ENCODE measurements at regions of chr1 and their contacts with region 1.

Region 1: DNA sequence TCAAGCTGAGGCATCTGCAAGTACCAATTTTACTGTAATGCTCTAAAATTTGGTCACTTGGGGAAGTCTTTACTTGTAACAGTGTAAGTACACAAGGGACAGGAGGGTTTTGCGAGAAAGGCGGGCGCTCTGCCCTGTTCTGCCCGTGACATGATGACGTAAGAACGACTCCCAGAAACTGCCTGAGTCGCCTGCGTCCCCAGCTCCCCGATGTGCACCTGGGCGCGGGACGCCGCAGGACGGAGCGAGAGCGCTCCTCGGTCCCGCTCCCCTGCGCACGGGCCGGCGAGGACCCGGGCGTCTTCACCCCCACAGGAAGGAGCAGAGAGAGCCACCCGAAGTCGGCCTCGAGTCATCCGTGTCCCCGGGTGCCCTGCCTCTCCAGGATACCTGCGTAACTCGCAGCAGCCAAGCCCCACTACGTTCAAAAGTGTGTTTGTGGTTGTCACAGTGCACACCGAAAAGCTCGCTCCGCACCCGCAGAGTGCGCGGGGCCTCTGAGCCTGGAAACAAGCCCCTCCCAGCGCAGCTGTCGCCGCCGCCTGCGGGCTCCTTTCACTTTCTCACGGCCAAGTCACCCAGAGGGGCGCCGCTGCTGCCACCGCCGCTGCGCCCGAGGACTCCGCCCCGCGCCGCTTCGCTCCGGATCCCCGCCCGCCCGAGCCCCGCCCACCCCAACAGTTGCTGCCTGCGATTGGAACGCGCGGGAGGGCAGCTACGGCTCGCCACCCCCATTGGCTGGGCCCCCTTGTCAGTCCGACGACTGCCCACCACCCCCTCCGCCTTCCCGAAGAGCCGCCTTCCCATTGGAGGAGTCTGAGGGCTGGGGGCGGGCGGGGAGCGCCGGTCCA is 3.2 kb upstream of the ZBTB18 start:
- DNase-seq: peak; percentile 85 to 98 (median 97)
- ATAC-seq: peak; percentile 87
- H3K4me3 ChIP-seq: peak overlapping the region; percentile 61
- H3K4me3 Mint-ChIP-seq: peak overlapping the region; percentile 86 to 96 (median 96)
- H3K27ac ChIP-seq: peak overlapping the region; percentile 96
- H3K27ac Mint-ChIP-seq: peak overlapping the region; percentile 97 to 100 (median 98)
- H3K4me1 ChIP-seq: peaks cover 6 to 23% of the 10 kb centered on the region in 2 donors
- H3K4me1 Mint-ChIP-seq: peaks cover 13 to 39% (median 33%) of the 10 kb centered on the region in 7 donors
- H3K27me3 ChIP-seq: no peaks in the 10 kb centered on the region
- H3K27me3 Mint-ChIP-seq: peaks cover 0 to 43% (median 0%) of the 10 kb centered on the region in 5 donors

Region 2: GRCh38 chr1:243343970-243344937 is 703.6 kb before region 1 on chr1:
- CTCF ChIA-PET with region 1: no interaction called
- POLR2A ChIA-PET with region 1: no interaction called
- intact Hi-C with region 1: loop called (anchors 5 kb)
- DNase-seq: peak in 7 of 9 donors; percentile 22 to 65 (median 51)
- ATAC-seq: peak; percentile 64
- H3K4me3 ChIP-seq: no peak overlapping the region
- H3K4me3 Mint-ChIP-seq: no peak overlapping the region
- H3K27ac ChIP-seq: no peak overlapping the region
- H3K27ac Mint-ChIP-seq: no peak overlapping the region
- H3K4me1 ChIP-seq: no peaks in the 10 kb centered on the region
- H3K4me1 Mint-ChIP-seq: peaks cover 0 to 12% (median 3%) of the 10 kb centered on the region in 7 donors
- H3K27me3 ChIP-seq: no peaks in the 10 kb centered on the region
- H3K27me3 Mint-ChIP-seq: no peaks in the 10 kb centered on the region

Region 3: GRCh38 chr1:243946946-243947345 is 100.9 kb before region 1 on chr1:
- CTCF ChIA-PET with region 1: no interaction called
- POLR2A ChIA-PET with region 1: no interaction called
- intact Hi-C with region 1: loop called in 1 of 2 experiments (anchors 2 kb)
- DNase-seq: peak in 6 of 9 donors; percentile 11 to 52 (median 38)
- ATAC-seq: peak; percentile 76
- H3K4me3 ChIP-seq: no peak overlapping the region
- H3K4me3 Mint-ChIP-seq: no peak overlapping the region
- H3K27ac ChIP-seq: no peak overlapping the region
- H3K27ac Mint-ChIP-seq: peak overlapping the region in 1 of 9 donors; percentile 17
- H3K4me1 ChIP-seq: no peaks in the 10 kb centered on the region
- H3K4me1 Mint-ChIP-seq: no peaks in the 10 kb centered on the region
- H3K27me3 ChIP-seq: no peaks in the 10 kb centered on the region
- H3K27me3 Mint-ChIP-seq: peaks cover 0 to 8% (median 5%) of the 10 kb centered on the region in 5 donors

Region 4: GRCh38 chr1:244060686-244061085 is 12.8 kb after region 1 on chr1:
- CTCF ChIA-PET with region 1: interaction called, 3 read pairs
- POLR2A ChIA-PET with region 1: interaction called, 17 read pairs
- intact Hi-C with region 1: loop called in 1 of 2 experiments (anchors 1 kb)
- DNase-seq: no peak
- ATAC-seq: no peak
- H3K4me3 ChIP-seq: no peak overlapping the region
- H3K4me3 Mint-ChIP-seq: no peak overlapping the region
- H3K27ac ChIP-seq: no peak overlapping the region
- H3K27ac Mint-ChIP-seq: no peak overlapping the region
- H3K4me1 ChIP-seq: no peaks in the 10 kb centered on the region
- H3K4me1 Mint-ChIP-seq: peaks cover 0 to 27% (median 2%) of the 10 kb centered on the region in 7 donors
- H3K27me3 ChIP-seq: no peaks in the 10 kb centered on the region
- H3K27me3 Mint-ChIP-seq: peaks cover 0 to 15% (median 0%) of the 10 kb centered on the region in 5 donors

Region 5: DNA sequence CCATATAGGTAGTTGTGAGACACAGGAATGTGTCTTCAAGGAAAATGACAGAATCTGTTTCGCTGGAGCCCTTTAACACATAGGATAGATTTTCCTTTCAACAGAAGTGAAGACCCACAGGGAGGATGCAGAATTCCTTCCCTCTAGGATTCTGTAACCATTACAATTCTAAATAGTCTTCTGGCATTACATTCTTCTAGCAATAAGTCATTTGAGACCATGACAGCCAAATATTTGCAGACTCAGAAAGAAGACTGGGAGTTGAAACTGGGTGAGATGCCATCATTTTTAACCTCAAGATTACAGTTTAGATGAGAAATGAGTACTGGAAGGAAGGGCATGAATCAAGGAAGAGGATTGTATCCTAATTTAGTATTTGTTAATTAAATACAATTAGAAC is 64.8 kb after region 1 on chr1:
- CTCF ChIA-PET with region 1: no interaction called
- POLR2A ChIA-PET with region 1: interaction called, 4 read pairs
- intact Hi-C with region 1: loop called in 1 of 2 experiments (anchors 1 kb)
- DNase-seq: no peak
- ATAC-seq: no peak
- H3K4me3 ChIP-seq: no peak overlapping the region
- H3K4me3 Mint-ChIP-seq: no peak overlapping the region
- H3K27ac ChIP-seq: no peak overlapping the region
- H3K27ac Mint-ChIP-seq: no peak overlapping the region
- H3K4me1 ChIP-seq: no peaks in the 10 kb centered on the region
- H3K4me1 Mint-ChIP-seq: no peaks in the 10 kb centered on the region
- H3K27me3 ChIP-seq: no peaks in the 10 kb centered on the region
- H3K27me3 Mint-ChIP-seq: peaks cover under 1 to 8% (median 5%) of the 10 kb centered on the region in 5 donors

Region 6: GRCh38 chr1:244451951-244452795 is 404.3 kb after region 1 on chr1:
- CTCF ChIA-PET with region 1: no interaction called
- POLR2A ChIA-PET with region 1: interaction called, 4 read pairs
- intact Hi-C with region 1: loop called (anchors 1 kb)
- DNase-seq: peak; percentile 93 to 99 (median 99)
- ATAC-seq: peak; percentile 94
- H3K4me3 ChIP-seq: peak overlapping the region; percentile 64
- H3K4me3 Mint-ChIP-seq: peak overlapping the region; percentile 76 to 99 (median 93)
- H3K27ac ChIP-seq: peak overlapping the region; percentile 96
- H3K27ac Mint-ChIP-seq: peak overlapping the region; percentile 85 to 99 (median 97)
- H3K4me1 ChIP-seq: peaks cover 27 to 36% of the 10 kb centered on the region in 2 donors
- H3K4me1 Mint-ChIP-seq: peaks cover 29 to 56% (median 41%) of the 10 kb centered on the region in 7 donors
- H3K27me3 ChIP-seq: no peaks in the 10 kb centered on the region
- H3K27me3 Mint-ChIP-seq: no peaks in the 10 kb centered on the region

Measured in naive thymus-derived CD4-positive, alpha-beta T cell (primary cell).